CD4-positive, alpha-beta T cell (primary cell): ENCODE measurements at regions of chr10 and their contacts with region 1.

Region 1: GRCh38 chr10:29496341-29497162 is 138.2 kb downstream of the SVIL start:
- DNase-seq: peak; percentile 25 to 71 (median 44)
- ATAC-seq: peak; percentile 41
- H3K4me3 ChIP-seq: no peak overlapping the region
- H3K4me3 Mint-ChIP-seq: no peak overlapping the region
- H3K27ac ChIP-seq: no peak overlapping the region
- H3K27ac Mint-ChIP-seq: no peak overlapping the region
- H3K4me1 ChIP-seq: no peaks in the 10 kb centered on the region
- H3K4me1 Mint-ChIP-seq: peaks cover 6% of the 10 kb centered on the region
- H3K27me3 ChIP-seq: no peaks in the 10 kb centered on the region
- H3K27me3 Mint-ChIP-seq: no peaks in the 10 kb centered on the region
- CTCF ChIP-seq: peak; percentile 94

Region 2: GRCh38 chr10:29386342-29386999 is 110.1 kb before region 1 on chr10:
- CTCF ChIA-PET with region 1: no interaction called
- POLR2A ChIA-PET with region 1: no interaction called
- intact Hi-C with region 1: loop called in 1 of 2 experiments (anchors 5 kb)
- DNase-seq: peak in 4 of 14 experiments; percentile 16 to 56 (median 48)
- ATAC-seq: peak; percentile 58
- H3K4me3 ChIP-seq: no peak overlapping the region
- H3K4me3 Mint-ChIP-seq: no peak overlapping the region
- H3K27ac ChIP-seq: no peak overlapping the region
- H3K27ac Mint-ChIP-seq: no peak overlapping the region
- H3K4me1 ChIP-seq: no peaks in the 10 kb centered on the region
- H3K4me1 Mint-ChIP-seq: peaks cover 3% of the 10 kb centered on the region
- H3K27me3 ChIP-seq: peaks cover 0 to 6% of the 10 kb centered on the region in 2 experiments
- H3K27me3 Mint-ChIP-seq: peaks cover 8% of the 10 kb centered on the region
- CTCF ChIP-seq: peak; percentile 89

Region 3: GRCh38 chr10:29535012-29535777 is 38.6 kb after region 1 on chr10:
- CTCF ChIA-PET with region 1: no interaction called
- POLR2A ChIA-PET with region 1: no interaction called
- intact Hi-C with region 1: no loop called
- DNase-seq: no peak
- ATAC-seq: no peak
- H3K4me3 ChIP-seq: no peak overlapping the region
- H3K4me3 Mint-ChIP-seq: no peak overlapping the region
- H3K27ac ChIP-seq: no peak overlapping the region
- H3K27ac Mint-ChIP-seq: no peak overlapping the region
- H3K4me1 ChIP-seq: no peaks in the 10 kb centered on the region
- H3K4me1 Mint-ChIP-seq: peaks cover 8% of the 10 kb centered on the region
- H3K27me3 ChIP-seq: no peaks in the 10 kb centered on the region
- H3K27me3 Mint-ChIP-seq: no peaks in the 10 kb centered on the region
- CTCF ChIP-seq: no peak